CD4-positive, alpha-beta memory T cell (primary cell): ENCODE measurements at regions of chr16 and their contacts with region 1.

Region 1: GRCh38 chr16:88452482-88453216 is 431 bp upstream of the ZFPM1 start:
- DNase-seq: peak; percentile 96 to 100 (median 97)
- H3K4me3 ChIP-seq: peak overlapping the region in 1 of 2 donors; percentile 57
- H3K4me3 Mint-ChIP-seq: peak overlapping the region; percentile 83 to 91 (median 86)
- H3K27ac ChIP-seq: peak overlapping the region; percentile 40
- H3K27ac Mint-ChIP-seq: peak overlapping the region; percentile 75 to 96 (median 92)
- H3K4me1 ChIP-seq: peaks cover 28% of the 10 kb centered on the region
- H3K4me1 Mint-ChIP-seq: peaks cover 11 to 44% (median 24%) of the 10 kb centered on the region in 4 donors
- H3K27me3 ChIP-seq: no peaks in the 10 kb centered on the region
- H3K27me3 Mint-ChIP-seq: no peaks in the 10 kb centered on the region

Region 2: DNA sequence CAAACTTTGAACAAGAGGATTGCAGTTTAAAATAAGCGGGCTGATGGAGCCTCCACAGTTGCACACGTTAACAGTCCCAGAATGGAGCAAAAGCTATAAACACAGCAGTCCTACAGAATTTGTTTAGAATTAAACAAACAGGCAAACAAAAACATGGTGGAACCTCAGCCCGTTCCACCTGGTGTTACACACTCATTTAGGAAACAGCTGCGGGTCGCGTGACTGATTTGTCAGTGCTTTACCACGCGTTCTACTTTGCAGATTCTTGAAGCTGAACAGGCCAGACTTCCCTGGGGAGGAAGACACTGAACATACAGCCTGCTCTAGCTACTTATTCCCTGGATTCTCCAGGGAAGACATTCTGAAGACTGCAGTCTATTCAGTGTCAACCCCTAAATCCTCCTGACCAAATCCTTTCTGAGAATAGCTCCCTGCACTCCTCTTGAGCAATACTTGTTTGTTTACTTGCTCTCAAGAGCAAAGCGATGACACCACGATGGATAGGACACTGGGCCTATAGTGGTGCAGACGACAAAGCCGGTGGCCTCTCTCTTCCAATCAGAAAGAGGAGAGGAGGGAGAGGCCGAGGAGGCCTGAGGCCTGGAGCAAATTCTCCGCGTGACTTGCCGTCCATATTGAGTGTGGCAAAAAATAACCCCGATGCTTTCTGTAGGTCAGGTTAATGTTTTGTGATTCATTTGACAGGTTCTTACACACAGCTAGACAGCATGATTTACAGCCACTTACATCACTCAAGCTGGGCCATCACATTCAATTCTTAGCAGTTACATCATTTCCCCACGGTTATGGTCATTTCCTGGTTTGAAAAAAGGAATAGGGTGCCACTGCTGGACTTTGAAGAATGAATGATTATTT is 1064.5 kb before region 1 on chr16:
- CTCF ChIA-PET with region 1: no interaction called
- POLR2A ChIA-PET with region 1: no interaction called
- intact Hi-C with region 1: loop called (anchors 5 kb)
- DNase-seq: peak; percentile 89 to 98 (median 92)
- H3K4me3 ChIP-seq: peak overlapping the region in 1 of 2 donors; percentile 9
- H3K4me3 Mint-ChIP-seq: peak overlapping the region; percentile 48 to 83 (median 66)
- H3K27ac ChIP-seq: peak overlapping the region; percentile 64
- H3K27ac Mint-ChIP-seq: peak overlapping the region; percentile 91 to 98 (median 95)
- H3K4me1 ChIP-seq: peaks cover 46% of the 10 kb centered on the region
- H3K4me1 Mint-ChIP-seq: peaks cover 22 to 57% (median 40%) of the 10 kb centered on the region in 4 donors
- H3K27me3 ChIP-seq: no peaks in the 10 kb centered on the region
- H3K27me3 Mint-ChIP-seq: peaks cover 0 to 3% of the 10 kb centered on the region in 2 donors

Region 3: DNA sequence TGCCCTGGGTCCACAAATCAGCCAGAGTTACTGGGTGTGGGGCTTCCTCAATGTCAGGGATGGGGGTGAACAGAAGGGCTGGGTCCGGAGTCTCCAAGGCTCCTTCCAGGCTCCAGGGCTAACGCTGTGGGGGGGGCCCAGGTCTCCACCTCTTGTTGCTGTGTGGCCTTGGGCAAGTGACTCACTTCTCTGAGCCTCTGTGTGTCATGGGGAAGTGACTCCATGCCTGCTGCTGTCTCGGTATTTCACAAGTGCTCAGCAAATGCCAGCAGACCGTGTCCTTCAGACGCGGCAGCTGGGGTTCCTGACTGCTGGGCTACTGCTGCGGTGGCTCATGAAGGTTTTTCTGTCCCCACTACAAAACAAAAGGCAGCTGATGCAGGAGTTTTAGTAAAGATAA is 823.7 kb before region 1 on chr16:
- CTCF ChIA-PET with region 1: no interaction called
- POLR2A ChIA-PET with region 1: no interaction called
- intact Hi-C with region 1: no loop called
- DNase-seq: no peak
- H3K4me3 ChIP-seq: no peak overlapping the region
- H3K4me3 Mint-ChIP-seq: no peak overlapping the region
- H3K27ac ChIP-seq: no peak overlapping the region
- H3K27ac Mint-ChIP-seq: no peak overlapping the region
- H3K4me1 ChIP-seq: no peaks in the 10 kb centered on the region
- H3K4me1 Mint-ChIP-seq: peaks cover 0 to 1% (median 0%) of the 10 kb centered on the region in 4 donors
- H3K27me3 ChIP-seq: no peaks in the 10 kb centered on the region
- H3K27me3 Mint-ChIP-seq: peaks cover 8 to 14% of the 10 kb centered on the region in 2 donors

Region 4: DNA sequence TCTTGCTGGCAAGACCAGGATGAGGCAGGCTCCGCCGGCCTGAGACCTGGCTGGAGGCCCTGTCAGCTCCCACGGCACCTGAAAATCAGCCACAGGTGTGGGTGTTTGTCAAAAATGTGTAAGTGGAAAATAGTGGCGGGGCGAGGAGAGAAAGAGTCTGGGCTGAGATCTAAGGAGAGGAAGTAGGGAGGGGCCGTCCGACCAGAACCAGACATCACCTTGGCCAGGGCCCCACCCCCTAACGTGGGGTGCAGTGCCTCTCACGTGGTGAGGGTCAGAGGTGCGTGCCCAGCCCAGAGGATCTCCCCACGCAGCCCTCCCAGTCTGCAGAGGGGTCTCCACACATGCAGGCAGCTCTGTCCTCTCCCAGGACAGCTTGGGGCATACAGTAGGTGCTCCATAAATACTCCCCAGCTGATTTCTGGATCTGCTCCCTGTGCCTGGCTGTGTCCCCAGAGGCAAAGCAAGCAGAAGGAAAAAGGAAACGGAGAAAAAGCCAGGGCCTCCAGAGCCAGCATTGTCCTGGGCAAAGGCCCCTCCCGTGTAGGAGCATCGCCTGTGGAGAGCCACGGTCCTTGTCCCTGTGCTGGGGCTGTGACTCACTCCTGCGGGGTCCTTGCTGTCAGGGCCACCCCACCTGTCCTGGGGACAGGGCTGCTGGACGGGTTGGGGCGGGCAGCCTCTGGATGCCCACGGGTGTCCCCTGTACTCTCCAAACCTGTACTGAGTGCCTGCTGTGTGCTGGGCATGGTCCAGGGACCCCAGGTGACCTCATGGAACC is 17.2 kb after region 1 on chr16:
- CTCF ChIA-PET with region 1: interaction called, 5 read pairs
- POLR2A ChIA-PET with region 1: interaction called, 11 read pairs
- intact Hi-C with region 1: no loop called
- DNase-seq: peak; percentile 52 to 75 (median 70)
- H3K4me3 ChIP-seq: peak overlapping the region in 1 of 2 donors; percentile 7
- H3K4me3 Mint-ChIP-seq: peak overlapping the region; percentile 5 to 78 (median 66)
- H3K27ac ChIP-seq: peak overlapping the region; percentile 63
- H3K27ac Mint-ChIP-seq: peak overlapping the region; percentile 85 to 99 (median 95)
- H3K4me1 ChIP-seq: peaks cover 76% of the 10 kb centered on the region
- H3K4me1 Mint-ChIP-seq: peaks cover 23 to 70% (median 49%) of the 10 kb centered on the region in 4 donors
- H3K27me3 ChIP-seq: no peaks in the 10 kb centered on the region
- H3K27me3 Mint-ChIP-seq: no peaks in the 10 kb centered on the region

Region 5: DNA sequence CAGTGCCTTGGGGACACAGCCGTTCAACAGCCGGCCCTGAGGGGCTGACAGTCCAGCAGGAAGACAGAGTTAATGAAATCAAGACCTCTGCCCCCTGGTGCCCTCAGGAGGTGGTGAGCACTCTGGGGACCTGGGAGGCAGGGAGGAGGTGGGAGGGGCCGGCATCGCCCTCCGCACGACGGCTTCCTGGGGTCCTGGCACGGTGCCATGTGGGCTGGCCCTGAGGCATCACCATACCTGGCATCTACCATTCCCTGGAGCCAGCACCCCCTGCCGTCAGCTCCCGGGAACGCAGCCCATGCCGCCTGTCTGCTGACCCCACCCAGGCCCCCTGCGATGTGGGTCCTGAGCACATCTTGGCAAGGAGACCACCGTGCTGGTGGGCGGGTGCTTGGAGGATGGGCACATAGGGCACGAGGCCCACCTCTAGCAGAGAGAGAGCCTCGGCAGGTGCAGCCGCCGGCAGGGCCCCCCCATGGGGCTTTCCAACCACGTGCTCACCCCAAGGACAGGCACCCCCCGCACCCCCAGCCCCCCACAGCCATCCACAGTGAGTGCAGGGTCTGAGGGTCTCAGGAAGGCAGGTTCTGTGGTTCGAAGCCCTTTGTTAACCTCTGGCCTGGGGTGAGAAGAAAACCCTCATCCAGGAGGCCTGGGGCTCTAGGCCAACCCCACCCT is 52.9 kb after region 1 on chr16:
- CTCF ChIA-PET with region 1: no interaction called
- POLR2A ChIA-PET with region 1: no interaction called
- intact Hi-C with region 1: loop called (anchors 1 kb)
- DNase-seq: peak; percentile 61 to 79 (median 71)
- H3K4me3 ChIP-seq: no peak overlapping the region
- H3K4me3 Mint-ChIP-seq: peak overlapping the region in 1 of 8 donors; percentile 15
- H3K27ac ChIP-seq: no peak overlapping the region
- H3K27ac Mint-ChIP-seq: peak overlapping the region in 2 of 7 donors; percentile 24 to 78
- H3K4me1 ChIP-seq: no peaks in the 10 kb centered on the region
- H3K4me1 Mint-ChIP-seq: peaks cover 0 to 21% (median 4%) of the 10 kb centered on the region in 4 donors
- H3K27me3 ChIP-seq: no peaks in the 10 kb centered on the region
- H3K27me3 Mint-ChIP-seq: no peaks in the 10 kb centered on the region

Region 6: DNA sequence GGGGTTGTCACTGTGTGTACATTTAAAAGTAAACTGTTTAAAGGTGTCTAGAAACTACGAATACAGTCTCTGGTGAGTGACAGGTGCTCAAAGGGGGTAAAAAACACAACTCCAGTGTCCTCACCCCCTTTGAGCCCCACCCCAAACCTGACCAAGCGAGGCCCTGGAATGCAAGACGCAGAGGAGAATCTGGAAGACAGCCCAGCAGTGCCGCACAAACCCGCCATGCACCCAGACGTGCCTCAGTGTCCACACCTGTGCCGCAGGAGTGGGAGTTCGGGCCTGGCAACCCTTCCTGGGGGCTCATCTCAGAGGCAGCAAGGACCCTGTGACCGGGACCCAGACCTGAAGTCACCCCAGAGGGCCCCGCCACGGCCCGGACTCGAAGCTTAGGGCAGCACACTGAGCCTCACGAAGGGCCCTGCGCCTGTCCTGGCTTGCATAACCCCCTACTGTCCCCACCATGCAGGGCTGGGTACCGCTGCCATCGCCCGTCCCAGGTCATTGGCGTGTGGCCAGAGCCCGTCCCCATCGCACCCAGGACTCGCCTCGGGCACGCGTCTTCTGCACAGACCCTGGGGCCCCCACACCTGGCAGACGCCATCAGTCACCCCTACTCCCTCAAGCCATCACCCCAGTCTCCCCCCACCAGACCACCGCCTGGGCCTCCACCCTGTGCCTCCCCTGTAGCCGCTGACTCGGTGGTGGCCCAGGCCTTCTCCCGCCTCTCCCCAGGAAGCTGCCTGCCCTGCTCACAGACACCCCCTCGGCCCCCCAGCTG is 84.5 kb after region 1 on chr16:
- CTCF ChIA-PET with region 1: no interaction called
- POLR2A ChIA-PET with region 1: interaction called, 12 read pairs
- intact Hi-C with region 1: no loop called
- DNase-seq: no peak
- H3K4me3 ChIP-seq: no peak overlapping the region
- H3K4me3 Mint-ChIP-seq: no peak overlapping the region
- H3K27ac ChIP-seq: no peak overlapping the region
- H3K27ac Mint-ChIP-seq: peak overlapping the region in 2 of 7 donors; percentile 23 to 83
- H3K4me1 ChIP-seq: peaks cover 10% of the 10 kb centered on the region
- H3K4me1 Mint-ChIP-seq: peaks cover 5 to 18% (median 6%) of the 10 kb centered on the region in 4 donors
- H3K27me3 ChIP-seq: no peaks in the 10 kb centered on the region
- H3K27me3 Mint-ChIP-seq: peaks cover 1 to 2% of the 10 kb centered on the region in 2 donors

Region 7: GRCh38 chr16:88619859-88620815 is 167.5 kb after region 1 on chr16:
- CTCF ChIA-PET with region 1: interaction called, 3 read pairs
- POLR2A ChIA-PET with region 1: interaction called, 10 read pairs
- intact Hi-C with region 1: no loop called
- DNase-seq: peak; percentile 90 to 95 (median 92)
- H3K4me3 ChIP-seq: no peak overlapping the region
- H3K4me3 Mint-ChIP-seq: peak overlapping the region; percentile 46 to 85 (median 68)
- H3K27ac ChIP-seq: peak overlapping the region; percentile 65
- H3K27ac Mint-ChIP-seq: peak overlapping the region; percentile 98 to 100 (median 99)
- H3K4me1 ChIP-seq: peaks cover 45% of the 10 kb centered on the region
- H3K4me1 Mint-ChIP-seq: peaks cover 16 to 54% (median 31%) of the 10 kb centered on the region in 4 donors
- H3K27me3 ChIP-seq: no peaks in the 10 kb centered on the region
- H3K27me3 Mint-ChIP-seq: peaks cover 0 to 1% of the 10 kb centered on the region in 2 donors

Region 8: DNA sequence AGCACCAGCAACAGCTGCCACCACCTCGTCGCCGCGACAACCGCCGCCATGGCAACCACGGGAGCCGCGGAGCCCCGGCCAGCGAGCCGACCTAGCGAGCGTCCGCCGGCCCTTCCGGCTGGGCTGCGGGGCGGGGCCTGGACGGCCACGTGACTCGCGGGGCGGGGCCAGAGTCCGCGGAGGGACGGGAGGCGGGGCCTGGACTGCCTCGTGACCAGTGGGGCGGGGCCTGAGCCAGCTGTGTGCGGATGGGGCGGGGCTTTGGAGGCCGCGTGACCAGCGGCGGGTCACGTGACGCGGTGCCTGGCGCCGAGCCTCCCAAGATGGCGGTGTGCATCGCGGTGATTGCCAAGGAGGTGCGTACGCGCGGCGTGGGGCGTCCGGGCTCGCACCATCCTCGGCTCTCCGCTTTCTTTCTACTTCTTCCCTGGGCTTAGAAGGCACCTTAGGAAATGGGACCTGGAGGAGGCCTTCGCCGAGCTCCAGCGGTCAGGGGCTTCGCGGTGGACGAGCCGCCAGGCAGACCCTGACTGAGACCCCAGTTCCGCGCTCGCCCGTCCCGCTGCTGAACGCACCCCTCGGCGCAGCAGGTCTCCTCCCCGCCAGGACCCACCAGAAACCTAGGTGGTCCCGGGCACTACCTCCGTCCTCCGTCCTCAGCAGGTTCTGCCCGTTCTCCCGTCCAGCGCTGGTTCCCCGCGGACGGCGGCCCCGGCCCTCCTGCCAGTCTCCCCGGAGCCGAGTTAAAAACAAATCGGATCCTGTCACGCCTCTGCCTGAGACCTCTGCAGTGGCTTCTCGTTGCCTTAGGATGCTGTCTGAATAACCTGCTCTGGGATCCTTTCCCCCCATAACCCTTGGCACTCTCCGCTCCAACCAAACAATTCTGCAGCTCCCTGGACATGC is 404.4 kb after region 1 on chr16 and contains the starts of genes GALNS and TRAPPC2L:
- CTCF ChIA-PET with region 1: no interaction called
- POLR2A ChIA-PET with region 1: no interaction called
- intact Hi-C with region 1: loop called (anchors 5 kb)
- DNase-seq: peak; percentile 96 to 98 (median 97)
- H3K4me3 ChIP-seq: peak within 1 kb of the TSS; percentile 67 to 93
- H3K4me3 Mint-ChIP-seq: peak within 1 kb of the TSS; percentile 94 to 100 (median 97)
- H3K27ac ChIP-seq: peak within 1 kb of the TSS; percentile 76
- H3K27ac Mint-ChIP-seq: peak within 1 kb of the TSS; percentile 95 to 99 (median 97)
- H3K4me1 ChIP-seq: peaks cover 27% of the 10 kb centered on the region
- H3K4me1 Mint-ChIP-seq: peaks cover 18 to 43% (median 28%) of the 10 kb centered on the region in 4 donors
- H3K27me3 ChIP-seq: no peaks in the 10 kb centered on the region
- H3K27me3 Mint-ChIP-seq: peaks cover 0 to 2% of the 10 kb centered on the region in 2 donors
- total RNA-seq, gene GALNS: 58.8 to 65.7 TPM
- total RNA-seq, gene TRAPPC2L: 66.6 to 67.1 TPM